Activated naive CD4-positive, alpha-beta T cell treated with anti-CD3 and anti-CD28 coated beads for 36 hours (primary cell): ENCODE measurements at regions of chr14 and their contacts with region 1.

Region 1: DNA sequence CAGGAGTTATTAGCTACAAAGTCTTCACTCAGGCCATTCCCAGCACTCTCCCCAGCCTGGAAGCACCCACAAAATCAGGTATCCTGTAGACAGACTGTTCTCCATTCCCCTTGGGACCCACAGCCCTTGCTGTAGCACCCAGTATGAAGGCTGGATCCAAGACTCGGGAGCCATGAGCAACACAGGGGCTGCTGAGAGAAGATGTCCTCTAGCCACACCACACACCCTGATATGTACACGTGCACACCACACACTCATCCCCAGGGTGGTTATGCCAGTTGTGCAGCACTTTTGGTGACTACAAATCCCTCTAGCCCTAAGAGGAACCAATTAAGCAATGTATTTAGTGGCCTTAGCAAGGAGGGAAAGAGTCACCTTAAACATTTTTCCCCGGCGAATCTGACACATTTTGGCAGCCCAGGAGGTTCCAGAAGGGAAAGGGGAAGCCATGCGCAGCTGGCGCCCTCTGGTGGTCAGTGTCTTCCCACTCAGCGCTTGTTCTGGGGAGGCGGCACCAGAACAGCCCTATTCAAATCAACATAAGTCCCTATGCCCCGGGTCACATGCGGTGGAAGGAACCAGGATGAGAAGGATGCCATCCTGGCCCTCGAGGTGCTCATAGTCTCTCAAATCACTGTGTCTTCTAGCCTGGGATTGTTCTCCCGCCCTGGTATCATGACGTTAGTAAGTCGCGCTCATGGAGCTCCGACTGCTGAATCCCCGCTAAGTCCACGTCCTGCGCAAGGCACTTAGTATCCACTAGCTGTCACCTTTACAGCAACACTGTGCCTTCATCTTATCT is 96.9 kb downstream of the GCH1 start:
- DNase-seq: peak; percentile 90
- H3K4me3 Mint-ChIP-seq: peak overlapping the region; percentile 6
- H3K27ac Mint-ChIP-seq: no peak overlapping the region
- H3K4me1 Mint-ChIP-seq: peaks cover 6% of the 10 kb centered on the region
- H3K27me3 Mint-ChIP-seq: peaks cover 11% of the 10 kb centered on the region

Region 2: GRCh38 chr14:54366736-54367735 is 438.7 kb before region 1 on chr14:
- CTCF ChIA-PET with region 1: no interaction called
- intact Hi-C with region 1: loop called (anchors 2 kb)
- DNase-seq: peak; percentile 53
- H3K4me3 Mint-ChIP-seq: no peak overlapping the region
- H3K27ac Mint-ChIP-seq: no peak overlapping the region
- H3K4me1 Mint-ChIP-seq: no peaks in the 10 kb centered on the region
- H3K27me3 Mint-ChIP-seq: peaks cover 3% of the 10 kb centered on the region

Region 3: GRCh38 chr14:54818201-54819133 is 12.7 kb after region 1 on chr14:
- CTCF ChIA-PET with region 1: interaction called, 15 read pairs
- intact Hi-C with region 1: no loop called
- DNase-seq: no peak
- H3K4me3 Mint-ChIP-seq: no peak overlapping the region
- H3K27ac Mint-ChIP-seq: no peak overlapping the region
- H3K4me1 Mint-ChIP-seq: no peaks in the 10 kb centered on the region
- H3K27me3 Mint-ChIP-seq: no peaks in the 10 kb centered on the region